Activated CD4-positive, alpha-beta memory T cell treated with anti-CD3 and anti-CD28 coated beads for 36 hours (primary cell): ENCODE measurements at regions of chr6 and their contacts with region 1.

Region 1: GRCh38 chr6:5174244-5174643 is 86.5 kb downstream of the LYRM4 start:
- DNase-seq: peak; percentile 78
- H3K4me3 Mint-ChIP-seq: peak overlapping the region; percentile 27
- H3K27ac Mint-ChIP-seq: peak overlapping the region; percentile 71
- H3K4me1 Mint-ChIP-seq: peaks cover 40% of the 10 kb centered on the region
- H3K27me3 Mint-ChIP-seq: no peaks in the 10 kb centered on the region

Region 2: DNA sequence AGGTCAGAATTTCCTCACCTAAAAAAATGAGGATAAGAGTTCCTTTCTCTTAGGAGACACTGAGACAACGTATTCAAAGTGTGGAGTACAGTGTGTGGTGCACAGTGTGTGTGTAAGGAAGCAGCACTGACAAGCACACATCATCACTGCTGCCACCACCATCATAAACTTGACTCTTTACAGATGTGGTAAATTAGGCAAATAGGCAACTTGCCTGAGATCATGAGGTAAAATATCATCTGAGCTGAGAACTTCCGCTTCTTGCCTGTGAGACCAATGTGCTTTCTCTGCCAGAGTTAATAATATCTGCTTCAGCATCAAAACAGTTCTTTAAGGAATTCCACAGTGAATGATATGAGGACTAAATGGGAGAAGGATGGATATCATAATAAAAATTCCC is 33.8 kb after region 1 on chr6:
- CTCF ChIA-PET with region 1: no interaction called
- POLR2A ChIA-PET with region 1: no interaction called
- intact Hi-C with region 1: no loop called
- DNase-seq: no peak
- H3K4me3 Mint-ChIP-seq: no peak overlapping the region
- H3K27ac Mint-ChIP-seq: no peak overlapping the region
- H3K4me1 Mint-ChIP-seq: peaks cover 4% of the 10 kb centered on the region
- H3K27me3 Mint-ChIP-seq: no peaks in the 10 kb centered on the region

Region 3: DNA sequence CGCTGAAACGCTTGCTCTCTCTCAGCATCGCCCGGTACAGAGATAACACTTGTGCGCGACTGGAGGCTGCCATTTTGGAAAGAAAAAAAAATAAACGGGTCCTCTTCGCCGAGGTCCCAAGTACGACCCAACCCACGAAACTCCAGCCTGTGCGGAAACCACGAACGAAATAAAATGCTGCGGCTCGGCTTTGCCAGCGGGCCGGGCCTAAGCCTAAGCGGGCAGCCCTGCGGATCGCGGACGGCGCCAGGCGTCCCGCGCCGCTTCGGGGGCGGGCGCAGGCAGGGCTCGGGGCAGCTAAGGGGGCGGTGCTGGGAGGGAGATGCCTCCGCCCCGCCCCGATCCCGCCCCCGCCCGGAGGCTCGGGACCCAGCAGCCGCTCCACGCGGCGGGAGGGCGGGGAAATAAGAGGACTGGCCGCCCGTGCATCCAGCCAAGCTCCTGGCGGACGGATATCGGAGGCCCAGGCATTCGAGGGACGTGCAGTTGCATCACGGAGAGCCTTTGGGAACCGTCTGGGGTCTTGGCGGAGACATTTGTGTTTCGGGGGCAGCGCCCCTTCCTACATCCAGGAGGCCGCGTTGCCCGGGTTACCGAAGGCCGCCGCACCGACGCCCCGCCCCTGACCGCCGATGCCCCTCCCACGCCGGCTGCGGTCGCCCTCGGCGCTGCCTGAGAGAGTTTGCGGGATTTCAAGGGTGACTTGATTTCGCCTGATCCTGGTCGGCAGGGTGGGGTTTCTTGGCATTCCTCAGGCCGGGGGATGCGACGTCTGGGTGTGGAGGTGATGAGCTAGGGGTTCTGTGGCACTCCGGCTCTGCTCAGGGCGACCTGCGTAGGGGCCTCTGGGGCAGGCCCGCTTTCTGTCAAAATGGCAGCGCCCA is 86.7 kb after region 1 on chr6 and contains the starts of genes FARS2 and LYRM4:
- CTCF ChIA-PET with region 1: interaction called, 3 read pairs
- POLR2A ChIA-PET with region 1: no interaction called
- intact Hi-C with region 1: loop called (anchors 1 kb)
- DNase-seq: peak; percentile 93
- H3K4me3 Mint-ChIP-seq: peak within 1 kb of the TSS; percentile 98
- H3K27ac Mint-ChIP-seq: peak within 1 kb of the TSS; percentile 99
- H3K4me1 Mint-ChIP-seq: peaks cover 36% of the 10 kb centered on the region
- H3K27me3 Mint-ChIP-seq: no peaks in the 10 kb centered on the region
- total RNA-seq, gene FARS2: 22.7 to 23.7 TPM
- total RNA-seq, gene LYRM4: 50.6 to 53.6 TPM